CD4-positive, alpha-beta memory T cell (primary cell): ENCODE measurements at regions of chr7 and their contacts with region 1.

Region 1: DNA sequence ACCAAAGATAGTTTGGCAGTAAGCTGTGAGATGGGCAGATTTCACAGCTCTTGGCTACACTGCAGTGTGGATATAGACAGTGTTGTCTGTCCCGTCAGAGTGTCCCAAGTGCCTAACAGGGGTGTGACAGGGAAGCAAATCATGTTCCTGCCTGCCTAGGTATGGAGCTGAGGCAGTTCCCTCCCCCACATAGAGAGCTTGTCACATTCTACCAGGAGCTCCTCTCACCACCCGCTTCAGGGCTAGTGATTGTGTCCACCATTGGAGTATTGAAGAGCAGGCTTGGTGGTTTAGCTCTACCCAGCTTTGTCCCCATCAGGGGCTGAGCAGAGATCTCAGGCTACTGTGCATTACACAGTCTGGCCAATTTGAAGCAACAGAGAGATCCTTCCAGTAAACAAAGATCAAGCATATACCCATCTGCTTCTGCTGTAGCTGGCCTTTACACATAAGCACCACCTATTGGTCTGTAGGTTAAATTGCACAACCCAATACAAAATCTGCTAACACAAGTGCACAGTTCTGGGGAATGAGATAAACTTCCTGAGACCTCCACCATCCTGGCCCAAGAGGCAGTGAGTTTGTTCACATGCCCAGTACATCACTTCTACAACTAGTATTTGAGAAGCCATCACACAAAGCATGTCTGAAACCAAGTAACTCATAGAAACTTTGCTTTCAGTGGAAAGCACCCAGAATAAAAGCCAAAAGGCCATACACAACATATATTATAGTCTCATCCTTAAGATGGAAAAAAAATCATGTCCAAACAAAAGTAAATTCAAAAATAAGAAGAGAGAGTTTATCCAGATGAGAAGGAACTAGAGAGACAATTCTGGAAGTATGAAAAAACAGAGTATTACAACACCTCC is 67.3 kb downstream of the GLCCI1 start:
- DNase-seq: peak in 4 of 5 donors; percentile 32 to 51 (median 41)
- H3K4me3 ChIP-seq: no peak overlapping the region
- H3K4me3 Mint-ChIP-seq: no peak overlapping the region
- H3K27ac ChIP-seq: no peak overlapping the region
- H3K27ac Mint-ChIP-seq: peak overlapping the region; percentile 16 to 86 (median 58)
- H3K4me1 ChIP-seq: peaks cover 20% of the 10 kb centered on the region
- H3K4me1 Mint-ChIP-seq: peaks cover 27 to 41% (median 30%) of the 10 kb centered on the region in 4 donors
- H3K27me3 ChIP-seq: no peaks in the 10 kb centered on the region
- H3K27me3 Mint-ChIP-seq: no peaks in the 10 kb centered on the region

Region 2: DNA sequence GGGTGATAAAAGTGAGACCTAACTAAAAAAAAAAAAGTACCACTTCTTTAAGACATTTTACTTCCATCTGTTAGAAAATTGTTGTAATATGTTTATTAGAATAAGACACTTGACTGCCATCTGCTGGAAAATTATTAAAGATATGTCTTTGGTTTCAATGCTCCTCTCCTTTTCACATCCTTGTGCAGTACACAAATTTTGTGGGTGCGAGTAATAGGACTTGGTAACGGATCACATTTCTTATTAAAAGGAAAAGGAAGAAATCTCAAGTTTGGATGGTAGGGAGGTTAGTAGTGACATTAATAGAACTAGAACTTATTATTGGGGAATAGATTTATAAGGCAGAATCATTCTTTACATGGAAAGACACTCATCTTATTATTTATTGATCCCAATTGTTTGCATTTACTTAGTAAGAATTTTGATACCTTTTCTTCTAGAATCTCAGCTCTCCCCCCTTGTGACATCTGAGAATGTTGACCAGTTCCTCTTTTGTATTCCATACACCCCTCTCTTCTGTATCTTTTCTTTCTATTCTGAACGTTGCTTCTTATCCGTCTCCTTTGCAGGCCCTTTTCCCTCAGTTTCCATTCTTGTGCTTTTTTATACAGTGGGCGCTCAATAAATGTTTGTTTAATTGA is 274.4 kb before region 1 on chr7:
- CTCF ChIA-PET with region 1: interaction called, 12 read pairs
- POLR2A ChIA-PET with region 1: interaction called, 3 read pairs
- intact Hi-C with region 1: loop called (anchors 5 kb)
- DNase-seq: peak in 4 of 5 donors; percentile 46 to 56 (median 49)
- H3K4me3 ChIP-seq: peak overlapping the region; percentile 4 to 75
- H3K4me3 Mint-ChIP-seq: peak overlapping the region; percentile 81 to 98 (median 92)
- H3K27ac ChIP-seq: peak overlapping the region; percentile 67
- H3K27ac Mint-ChIP-seq: peak overlapping the region; percentile 89 to 98 (median 95)
- H3K4me1 ChIP-seq: peaks cover 35% of the 10 kb centered on the region
- H3K4me1 Mint-ChIP-seq: peaks cover 35 to 40% (median 39%) of the 10 kb centered on the region in 4 donors
- H3K27me3 ChIP-seq: no peaks in the 10 kb centered on the region
- H3K27me3 Mint-ChIP-seq: no peaks in the 10 kb centered on the region

Region 3: DNA sequence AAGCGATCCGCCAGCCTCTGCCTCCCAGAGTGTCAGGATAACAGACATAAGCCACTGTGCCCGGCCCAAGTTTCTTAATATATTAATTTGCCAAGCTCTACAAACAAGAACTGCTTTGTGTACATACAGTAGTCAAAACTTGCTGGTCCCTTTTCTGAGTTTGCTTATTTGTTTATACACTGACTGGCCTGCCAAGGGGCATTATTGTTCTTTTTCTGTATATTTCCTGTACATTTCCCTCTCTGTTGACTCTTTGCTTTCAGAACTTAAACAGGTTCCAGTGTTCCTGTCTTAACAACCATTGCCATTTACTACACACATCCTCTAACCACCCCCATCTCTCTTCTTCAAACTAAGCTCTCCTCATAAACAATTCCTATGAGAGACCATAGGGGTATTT is 256.0 kb before region 1 on chr7:
- CTCF ChIA-PET with region 1: no interaction called
- POLR2A ChIA-PET with region 1: no interaction called
- intact Hi-C with region 1: no loop called
- DNase-seq: no peak
- H3K4me3 ChIP-seq: no peak overlapping the region
- H3K4me3 Mint-ChIP-seq: no peak overlapping the region
- H3K27ac ChIP-seq: no peak overlapping the region
- H3K27ac Mint-ChIP-seq: peak overlapping the region in 3 of 7 donors; percentile 8 to 42 (median 25)
- H3K4me1 ChIP-seq: peaks cover 9% of the 10 kb centered on the region
- H3K4me1 Mint-ChIP-seq: peaks cover 12 to 30% (median 22%) of the 10 kb centered on the region in 4 donors
- H3K27me3 ChIP-seq: no peaks in the 10 kb centered on the region
- H3K27me3 Mint-ChIP-seq: no peaks in the 10 kb centered on the region

Region 4: DNA sequence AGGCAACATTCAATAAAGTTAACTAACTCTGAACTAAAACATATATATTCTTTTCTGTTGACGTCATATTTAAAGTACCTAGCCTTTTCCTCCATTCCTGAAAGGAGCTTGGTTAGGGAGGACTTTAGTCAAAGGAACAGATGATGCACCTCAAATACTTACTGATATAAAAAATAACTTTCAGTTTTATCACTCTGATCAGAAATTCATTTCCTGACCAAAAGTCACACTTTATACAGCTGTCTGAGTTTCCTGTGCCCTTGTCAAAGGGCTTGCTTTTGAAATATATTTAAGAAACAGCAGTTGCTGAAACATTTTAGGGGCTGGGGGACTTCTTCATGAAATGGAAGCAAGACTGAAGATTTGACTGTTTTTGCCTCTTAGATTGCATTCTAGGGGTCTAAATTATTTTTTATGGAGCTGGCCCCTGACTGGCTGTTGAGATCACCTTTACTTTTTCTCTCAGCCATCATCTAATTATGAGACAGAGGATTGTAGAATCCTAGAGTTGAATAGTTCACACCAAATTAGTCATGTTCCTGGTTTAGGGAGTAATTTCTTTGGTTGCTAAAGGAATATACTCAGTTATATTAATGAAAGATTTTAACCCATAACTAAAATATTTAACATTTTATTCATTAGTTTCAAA is 20.7 kb before region 1 on chr7:
- CTCF ChIA-PET with region 1: interaction called, 10 read pairs
- POLR2A ChIA-PET with region 1: interaction called, 4 read pairs
- intact Hi-C with region 1: loop called (anchors 2 kb)
- DNase-seq: peak in 4 of 5 donors; percentile 33 to 49 (median 38)
- H3K4me3 ChIP-seq: no peak overlapping the region
- H3K4me3 Mint-ChIP-seq: peak overlapping the region; percentile 55 to 81 (median 65)
- H3K27ac ChIP-seq: peak overlapping the region; percentile 24
- H3K27ac Mint-ChIP-seq: peak overlapping the region; percentile 65 to 89 (median 83)
- H3K4me1 ChIP-seq: peaks cover 44% of the 10 kb centered on the region
- H3K4me1 Mint-ChIP-seq: peaks cover 34 to 52% (median 43%) of the 10 kb centered on the region in 4 donors
- H3K27me3 ChIP-seq: no peaks in the 10 kb centered on the region
- H3K27me3 Mint-ChIP-seq: no peaks in the 10 kb centered on the region

Region 5: GRCh38 chr7:8022628-8023027 is 13.3 kb before region 1 on chr7:
- CTCF ChIA-PET with region 1: interaction called, 14 read pairs
- POLR2A ChIA-PET with region 1: no interaction called
- intact Hi-C with region 1: no loop called
- DNase-seq: no peak
- H3K4me3 ChIP-seq: no peak overlapping the region
- H3K4me3 Mint-ChIP-seq: no peak overlapping the region
- H3K27ac ChIP-seq: no peak overlapping the region
- H3K27ac Mint-ChIP-seq: no peak overlapping the region
- H3K4me1 ChIP-seq: peaks cover 13% of the 10 kb centered on the region
- H3K4me1 Mint-ChIP-seq: peaks cover 8 to 13% (median 9%) of the 10 kb centered on the region in 4 donors
- H3K27me3 ChIP-seq: no peaks in the 10 kb centered on the region
- H3K27me3 Mint-ChIP-seq: no peaks in the 10 kb centered on the region

Region 6: DNA sequence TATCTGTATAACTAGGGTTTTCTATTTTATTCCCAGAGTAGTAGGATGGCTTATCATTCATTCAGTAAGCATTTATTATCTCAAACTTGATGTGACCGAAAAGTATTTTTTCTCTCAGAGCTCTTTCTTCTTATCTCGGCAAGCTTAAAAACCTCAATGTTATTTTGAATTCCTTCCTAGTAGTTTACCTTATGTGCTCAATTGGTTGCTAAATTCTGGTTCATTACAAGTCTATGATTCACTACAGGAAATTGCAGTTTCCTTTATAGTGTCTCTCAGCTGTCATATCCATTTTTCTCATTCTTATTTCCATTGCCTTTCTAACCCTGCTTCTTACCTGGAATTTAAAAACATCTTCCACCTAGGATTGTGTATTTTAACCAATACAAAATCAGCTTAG is 238.7 kb after region 1 on chr7:
- CTCF ChIA-PET with region 1: no interaction called
- POLR2A ChIA-PET with region 1: no interaction called
- intact Hi-C with region 1: no loop called
- DNase-seq: no peak
- H3K4me3 ChIP-seq: no peak overlapping the region
- H3K4me3 Mint-ChIP-seq: no peak overlapping the region
- H3K27ac ChIP-seq: no peak overlapping the region
- H3K27ac Mint-ChIP-seq: no peak overlapping the region
- H3K4me1 ChIP-seq: no peaks in the 10 kb centered on the region
- H3K4me1 Mint-ChIP-seq: no peaks in the 10 kb centered on the region
- H3K27me3 ChIP-seq: no peaks in the 10 kb centered on the region
- H3K27me3 Mint-ChIP-seq: peaks cover 8% of the 10 kb centered on the region in 2 donors